Activated CD8-positive, alpha-beta T cell treated with anti-CD3 and anti-CD28 coated beads, Interleukin-2, amount 10 ng/mL, durations not matched to agents 7 days and 5 days (primary cell): ENCODE measurements at regions of chr11 and their contacts with region 1.

Region 1: GRCh38 chr11:44936525-44936924 is 14.2 kb downstream of the TP53I11 start:
- DNase-seq: peak; percentile 86
- ATAC-seq: peak; percentile 77
- H3K4me3 Mint-ChIP-seq: no peak overlapping the region
- H3K27ac Mint-ChIP-seq: no peak overlapping the region
- H3K4me1 Mint-ChIP-seq: no peaks in the 10 kb centered on the region
- H3K27me3 Mint-ChIP-seq: no peaks in the 10 kb centered on the region

Region 2: GRCh38 chr11:44702889-44703288 is 233.6 kb before region 1 on chr11:
- CTCF ChIA-PET with region 1: no interaction called
- POLR2A ChIA-PET with region 1: no interaction called
- DNase-seq: no peak
- ATAC-seq: no peak
- H3K4me3 Mint-ChIP-seq: no peak overlapping the region
- H3K27ac Mint-ChIP-seq: no peak overlapping the region
- H3K4me1 Mint-ChIP-seq: no peaks in the 10 kb centered on the region
- H3K27me3 Mint-ChIP-seq: peaks cover 20% of the 10 kb centered on the region

Region 3: DNA sequence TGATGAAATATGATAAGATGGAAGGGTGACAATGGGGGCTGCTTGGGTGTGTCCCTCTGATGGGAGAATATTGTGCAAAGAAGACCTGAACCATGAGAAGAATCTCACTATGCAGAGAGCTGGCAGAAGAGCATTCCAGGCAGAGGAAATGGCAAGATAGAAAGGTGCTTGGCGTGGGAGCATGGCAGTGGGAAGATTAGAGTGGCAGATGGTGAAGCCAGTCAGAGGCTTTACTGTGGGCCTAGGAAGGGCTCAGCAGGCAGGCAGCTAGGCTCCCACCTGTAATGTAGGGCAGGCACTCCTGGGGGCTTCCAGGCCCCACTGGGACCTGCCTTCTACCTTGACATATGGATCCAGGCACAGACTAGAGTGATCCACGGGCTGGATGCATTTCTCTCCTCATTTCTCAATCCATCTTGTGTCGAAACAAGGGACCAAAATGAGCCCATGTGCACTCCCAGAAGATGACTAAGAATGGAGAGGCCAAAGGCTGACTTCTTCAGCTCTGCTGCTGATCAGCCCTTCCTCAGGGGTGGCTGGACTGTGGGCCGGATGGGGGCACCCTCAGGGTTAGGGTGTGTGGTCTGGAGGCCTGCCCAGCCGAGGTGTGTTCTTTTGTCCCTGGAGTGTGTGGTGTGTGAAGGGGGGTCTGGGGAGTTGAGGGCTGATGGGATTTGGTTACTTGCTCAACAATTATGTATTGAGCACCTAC is 121.5 kb before region 1 on chr11:
- CTCF ChIA-PET with region 1: no interaction called
- POLR2A ChIA-PET with region 1: no interaction called
- DNase-seq: no peak
- ATAC-seq: no peak
- H3K4me3 Mint-ChIP-seq: no peak overlapping the region
- H3K27ac Mint-ChIP-seq: no peak overlapping the region
- H3K4me1 Mint-ChIP-seq: no peaks in the 10 kb centered on the region
- H3K27me3 Mint-ChIP-seq: peaks cover 2% of the 10 kb centered on the region

Region 4: DNA sequence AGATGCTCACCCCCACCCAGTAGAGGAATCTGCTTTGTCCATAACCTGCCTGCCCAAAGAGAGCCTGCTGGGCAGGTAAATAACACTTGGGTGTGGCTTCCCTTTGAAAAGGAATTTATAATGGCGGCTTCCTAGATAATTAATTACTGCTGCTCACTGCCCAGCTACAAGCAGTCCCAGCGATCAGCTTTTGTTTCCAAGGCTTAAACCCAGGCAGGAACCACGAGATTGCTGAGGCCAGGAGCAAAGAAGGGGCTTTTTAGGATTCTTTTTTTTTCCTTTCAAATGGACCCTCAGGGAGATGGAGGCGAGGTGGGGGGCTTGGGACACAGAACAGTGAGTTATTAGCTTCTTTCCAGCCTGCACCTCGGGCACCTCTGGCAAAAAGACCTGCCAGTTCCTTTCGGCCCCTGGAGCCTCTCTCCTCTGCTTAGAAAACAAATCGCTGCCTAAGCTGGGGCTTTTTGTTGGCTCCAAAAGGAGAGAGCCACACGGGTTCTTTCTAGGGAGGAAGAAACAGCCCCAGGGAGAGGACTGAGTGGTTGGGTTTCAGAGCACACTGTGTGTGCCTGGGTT is 102.6 kb before region 1 on chr11:
- CTCF ChIA-PET with region 1: no interaction called
- POLR2A ChIA-PET with region 1: no interaction called
- DNase-seq: no peak
- ATAC-seq: no peak
- H3K4me3 Mint-ChIP-seq: no peak overlapping the region
- H3K27ac Mint-ChIP-seq: no peak overlapping the region
- H3K4me1 Mint-ChIP-seq: no peaks in the 10 kb centered on the region
- H3K27me3 Mint-ChIP-seq: peaks cover 26% of the 10 kb centered on the region

Region 5: DNA sequence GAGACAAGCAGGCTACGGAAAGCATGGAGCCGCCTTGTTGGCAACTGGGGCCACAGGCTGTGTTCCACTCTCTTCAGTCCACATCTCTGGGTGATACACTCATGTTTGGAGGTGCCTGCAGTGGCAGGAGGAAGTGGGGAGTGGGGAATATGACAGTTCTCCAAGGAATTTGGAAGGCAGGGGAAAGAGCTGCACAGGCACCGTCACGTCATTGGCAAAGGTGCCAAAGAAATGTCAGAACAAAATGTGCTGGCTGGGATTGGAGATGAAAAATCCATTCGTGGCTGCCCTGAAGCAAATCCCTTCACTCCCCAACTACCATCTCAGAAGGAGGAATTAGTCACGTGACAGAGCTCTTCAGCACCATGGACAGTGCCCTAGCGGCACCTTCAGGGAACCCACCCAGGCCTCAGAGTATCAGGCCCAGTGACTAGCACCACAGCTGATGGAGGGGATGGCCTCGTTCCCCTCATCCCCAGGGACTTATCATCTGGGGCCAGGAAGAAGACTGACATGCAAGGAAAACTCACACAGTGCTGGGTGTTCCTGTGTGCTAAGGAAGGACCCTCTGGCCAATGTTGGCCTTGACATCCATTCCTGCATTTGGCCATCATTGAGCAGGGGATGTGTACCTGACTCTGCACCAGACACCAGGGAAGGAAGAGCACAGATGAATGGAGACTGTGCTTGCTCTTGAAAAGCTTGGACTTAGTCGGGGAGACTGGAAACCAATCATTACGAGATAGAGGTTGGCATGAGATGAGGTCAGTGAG is 161.4 kb after region 1 on chr11:
- CTCF ChIA-PET with region 1: interaction called, 364 read pairs
- POLR2A ChIA-PET with region 1: interaction called, 13 read pairs
- DNase-seq: peak; percentile 70
- ATAC-seq: no peak
- H3K4me3 Mint-ChIP-seq: no peak overlapping the region
- H3K27ac Mint-ChIP-seq: no peak overlapping the region
- H3K4me1 Mint-ChIP-seq: peaks cover 20% of the 10 kb centered on the region
- H3K27me3 Mint-ChIP-seq: peaks cover 28% of the 10 kb centered on the region